ENCODE measurements at regions of chr1 and their contacts with region 1.

Region 1: DNA sequence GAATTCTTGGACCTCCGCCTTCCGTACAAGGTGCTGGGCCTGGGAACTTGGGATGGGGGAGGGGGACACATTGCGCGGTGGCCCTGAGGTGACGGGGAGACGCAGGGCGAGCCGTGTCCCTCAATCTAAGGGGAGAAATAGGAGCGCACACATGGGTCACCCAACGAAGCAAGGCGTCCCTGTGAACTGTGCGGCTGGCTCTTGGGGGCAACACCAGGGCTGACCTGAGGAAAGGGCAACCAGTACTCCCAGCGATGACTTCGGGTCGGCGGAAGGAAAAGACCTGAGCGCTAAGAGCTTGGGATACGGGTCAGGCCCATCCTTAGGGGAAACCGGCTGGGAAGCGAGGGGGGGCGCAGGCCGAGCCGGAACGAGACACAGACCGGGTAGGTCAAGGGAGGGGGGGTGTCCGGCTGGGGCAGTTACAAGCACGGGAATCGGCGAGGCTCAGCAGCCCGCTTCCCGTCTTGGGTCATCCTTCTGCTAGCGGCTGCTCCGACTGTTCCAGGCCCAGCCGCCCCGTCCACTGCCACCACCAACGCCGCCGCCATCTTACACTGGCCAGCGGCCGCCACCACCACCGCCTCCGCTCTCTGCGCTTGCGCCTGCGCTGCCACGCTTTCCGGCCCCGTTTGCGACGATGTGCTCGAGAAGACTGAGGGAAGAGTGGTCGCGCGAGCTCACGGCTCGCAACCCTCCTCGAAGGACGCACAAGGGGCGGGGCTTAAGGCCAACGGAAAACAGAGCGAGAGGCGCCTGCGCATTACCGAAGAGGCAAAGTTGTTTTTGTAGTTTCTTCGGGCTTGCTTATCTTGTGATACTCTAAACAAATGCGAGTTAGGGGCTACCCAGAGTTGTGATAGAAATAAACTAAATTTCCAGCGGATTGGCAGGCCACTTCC is at the start of gene DCAF8:
- DNase-seq: peak; percentile 98
- H3K4me3 Mint-ChIP-seq: peak within 1 kb of the TSS; percentile 98
- H3K27ac Mint-ChIP-seq: peak within 1 kb of the TSS; percentile 99
- H3K4me1 Mint-ChIP-seq: peaks cover 36% of the 10 kb centered on the region
- H3K27me3 Mint-ChIP-seq: no peaks in the 10 kb centered on the region
- total RNA-seq, gene DCAF8: 132 and 143 TPM in 2 replicates

Region 2: DNA sequence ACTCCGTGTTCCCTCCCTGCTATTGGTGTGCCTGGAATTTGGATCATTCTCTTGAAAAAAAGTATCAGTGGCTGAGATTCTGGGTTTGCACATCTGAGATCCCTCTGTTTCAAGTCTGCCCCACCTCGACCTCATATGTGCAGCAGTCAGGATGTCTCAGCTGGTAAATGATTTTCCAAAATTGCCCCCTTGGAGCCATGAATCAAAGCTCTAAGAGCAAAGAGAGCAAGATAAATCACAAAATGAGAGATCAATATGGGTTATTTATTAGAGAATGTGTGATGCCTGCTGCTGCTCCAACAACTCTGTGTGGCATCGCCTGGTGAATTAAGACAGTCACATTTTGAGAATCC is 556.3 kb before region 1 on chr1:
- intact Hi-C with region 1: no loop called
- DNase-seq: no peak
- H3K4me3 Mint-ChIP-seq: no peak overlapping the region
- H3K27ac Mint-ChIP-seq: no peak overlapping the region
- H3K4me1 Mint-ChIP-seq: no peaks in the 10 kb centered on the region
- H3K27me3 Mint-ChIP-seq: no peaks in the 10 kb centered on the region

Region 3: DNA sequence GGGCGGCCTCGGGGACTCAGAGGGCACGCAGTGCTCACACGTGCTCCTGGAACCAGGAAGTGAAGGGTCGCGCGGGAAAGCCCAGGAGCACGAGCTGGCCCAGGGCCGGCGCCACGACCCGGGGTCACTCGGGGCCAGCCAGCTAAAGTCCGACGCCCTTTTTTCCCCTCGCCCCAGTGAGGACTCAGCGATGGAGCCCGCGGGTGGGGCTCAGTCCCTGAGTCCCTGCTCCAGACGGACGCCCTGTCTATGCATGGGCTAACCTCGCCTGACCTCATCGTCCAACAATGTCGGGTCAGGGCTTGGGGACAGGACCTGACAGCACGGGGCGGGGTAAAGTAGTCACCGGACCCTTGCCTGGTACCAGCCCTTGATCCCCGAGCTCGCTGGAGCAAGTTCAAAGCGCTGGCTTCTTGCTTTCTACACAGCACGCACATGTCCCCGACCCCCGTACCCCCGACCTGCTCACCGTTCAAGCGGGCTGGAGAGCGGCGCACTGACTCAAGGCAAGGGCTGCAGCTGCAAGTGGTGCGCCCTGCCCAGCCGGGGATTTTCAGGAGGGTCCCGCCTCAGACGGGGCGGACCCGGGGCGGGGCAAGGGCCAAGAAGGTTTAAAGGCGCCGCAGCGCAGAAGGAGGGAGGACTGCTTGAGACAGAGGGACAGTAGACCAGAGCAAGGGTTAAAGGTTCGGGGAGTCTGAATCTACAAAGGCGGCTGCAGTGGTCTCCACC is 337.0 kb before region 1 on chr1 and contains the start of gene TAGLN2:
- intact Hi-C with region 1: loop called (anchors 2 kb)
- DNase-seq: peak; percentile 86
- H3K4me3 Mint-ChIP-seq: peak within 1 kb of the TSS; percentile 95
- H3K27ac Mint-ChIP-seq: peak within 1 kb of the TSS; percentile 98
- H3K4me1 Mint-ChIP-seq: peaks cover 36% of the 10 kb centered on the region
- H3K27me3 Mint-ChIP-seq: no peaks in the 10 kb centered on the region
- total RNA-seq, gene TAGLN2: 558 and 578 TPM in 2 replicates

Region 4: GRCh38 chr1:160205242-160206035 is 56.7 kb before region 1 on chr1 and contains the start of gene PEA15:
- intact Hi-C with region 1: loop called (anchors 2 kb)
- DNase-seq: peak; percentile 58
- H3K4me3 Mint-ChIP-seq: peak within 1 kb of the TSS; percentile 88
- H3K27ac Mint-ChIP-seq: peak within 1 kb of the TSS; percentile 86
- H3K4me1 Mint-ChIP-seq: peaks cover 38% of the 10 kb centered on the region
- H3K27me3 Mint-ChIP-seq: no peaks in the 10 kb centered on the region
- total RNA-seq, gene PEA15: 61.0 and 61.7 TPM in 2 replicates

Region 5: GRCh38 chr1:160284782-160285344 is 22.7 kb after region 1 on chr1 and contains the start of gene PEX19:
- intact Hi-C with region 1: loop called (anchors 1 kb)
- DNase-seq: peak; percentile 92
- H3K4me3 Mint-ChIP-seq: peak within 1 kb of the TSS; percentile 99
- H3K27ac Mint-ChIP-seq: peak within 1 kb of the TSS; percentile 97
- H3K4me1 Mint-ChIP-seq: peaks cover 19% of the 10 kb centered on the region
- H3K27me3 Mint-ChIP-seq: no peaks in the 10 kb centered on the region
- total RNA-seq, gene PEX19: 60.9 and 68.5 TPM in 2 replicates

Region 6: DNA sequence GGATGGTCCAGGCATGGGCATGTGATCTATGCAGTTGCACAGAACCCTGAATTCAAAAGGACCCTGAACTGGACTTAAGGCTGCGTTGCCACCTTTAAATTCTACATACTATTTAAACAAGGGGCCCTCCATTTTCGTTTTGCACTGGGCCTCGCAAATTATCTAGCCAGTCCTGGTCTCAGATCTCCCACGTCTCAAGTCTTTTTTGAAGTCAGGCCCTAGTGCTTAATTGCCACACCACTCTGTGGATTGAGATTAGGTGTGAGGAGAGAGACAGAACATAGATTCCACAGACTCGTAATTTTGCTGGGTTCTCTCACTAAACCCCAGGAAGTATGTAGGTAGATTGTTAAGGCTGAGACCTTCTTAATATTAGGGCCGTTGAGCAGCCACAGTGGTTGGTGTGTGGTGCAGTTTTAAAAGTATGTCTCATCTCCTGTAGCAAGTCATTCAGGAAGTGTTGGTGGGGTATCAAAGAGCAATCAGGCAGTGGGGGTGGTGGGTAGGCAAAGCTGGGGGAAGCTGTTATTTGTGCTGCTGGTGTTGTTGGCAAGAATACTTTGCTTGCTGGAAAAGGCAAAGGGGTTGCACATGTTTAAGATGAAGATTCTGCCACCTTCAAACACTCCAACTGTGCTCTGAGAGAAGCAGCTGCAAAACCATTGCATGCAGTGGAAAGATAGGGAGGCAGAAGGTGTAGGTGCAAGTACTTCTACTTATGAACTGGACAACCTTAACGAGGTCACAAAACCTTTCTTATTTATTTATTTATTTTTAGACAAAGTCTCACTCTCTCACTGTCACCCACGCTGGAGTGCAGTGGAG is 305.9 kb after region 1 on chr1:
- intact Hi-C with region 1: loop called (anchors 5 kb)
- DNase-seq: peak; percentile 59
- H3K4me3 Mint-ChIP-seq: peak overlapping the region; percentile 76
- H3K27ac Mint-ChIP-seq: peak overlapping the region; percentile 98
- H3K4me1 Mint-ChIP-seq: peaks cover 72% of the 10 kb centered on the region
- H3K27me3 Mint-ChIP-seq: no peaks in the 10 kb centered on the region

Measured in activated T-helper 2 cell treated with anti-CD3 and anti-CD28 coated beads, Interferon-gamma antibody, Interleukin-2, Interleukin-4, amounts not matched to agents 10 μg/mL and 5 μg/mL and 100 μg/mL, durations not matched to agents 14 hours and 24 hours and 36 hours (primary cell).